Activated B cell treated with CpG ODN at 0.5 μM for 24 hours (primary cell): ENCODE measurements at regions of chr6 and their contacts with region 1.

Region 1: GRCh38 chr6:90285611-90286381 is 10.8 kb downstream of the BACH2 start:
- DNase-seq: no peak
- ATAC-seq: peak; percentile 67
- H3K4me3 Mint-ChIP-seq: peak overlapping the region; percentile 77
- H3K27ac Mint-ChIP-seq: peak overlapping the region; percentile 88
- H3K4me1 Mint-ChIP-seq: peaks cover 92% of the 10 kb centered on the region
- H3K27me3 Mint-ChIP-seq: no peaks in the 10 kb centered on the region
- CTCF ChIP-seq: no peak

Region 2: DNA sequence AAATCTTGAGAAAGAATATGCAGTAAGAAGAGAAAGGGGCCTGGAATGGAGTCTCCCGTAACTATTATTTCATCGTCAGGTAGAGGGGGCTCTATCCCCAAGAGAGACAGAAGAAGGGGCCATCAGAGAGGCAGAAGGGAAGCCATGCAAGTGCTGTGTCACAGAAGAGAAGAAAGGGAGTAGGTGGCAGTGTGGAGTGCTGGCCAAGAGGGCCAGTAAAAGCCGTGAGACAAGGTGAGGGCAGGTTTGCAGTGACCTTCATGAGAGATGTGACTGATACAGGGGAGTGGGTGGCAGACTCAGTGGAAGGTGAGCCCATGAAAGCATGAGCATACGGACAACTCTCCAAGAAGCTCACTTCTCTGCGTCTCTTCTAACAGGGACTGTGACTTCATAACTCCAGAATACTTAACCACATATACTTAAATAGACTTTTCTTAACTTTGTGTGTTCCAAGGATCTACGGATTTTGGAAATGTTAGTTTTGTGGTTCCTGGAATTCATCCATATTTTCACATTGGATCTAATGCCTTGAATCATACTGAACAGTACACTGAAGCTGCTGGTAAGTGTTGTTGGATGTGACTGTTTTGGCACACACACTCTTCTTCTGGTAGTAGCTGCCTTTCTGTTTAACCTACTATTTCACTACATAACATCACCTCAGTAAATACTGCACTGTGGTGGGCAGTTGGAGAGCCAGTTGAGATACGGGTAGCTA is 1124.3 kb before region 1 on chr6:
- CTCF ChIA-PET with region 1: no interaction called
- POLR2A ChIA-PET with region 1: no interaction called
- intact Hi-C with region 1: no loop called
- DNase-seq: no peak
- ATAC-seq: no peak
- H3K4me3 Mint-ChIP-seq: no peak overlapping the region
- H3K27ac Mint-ChIP-seq: no peak overlapping the region
- H3K4me1 Mint-ChIP-seq: no peaks in the 10 kb centered on the region
- H3K27me3 Mint-ChIP-seq: no peaks in the 10 kb centered on the region
- CTCF ChIP-seq: no peak

Region 3: DNA sequence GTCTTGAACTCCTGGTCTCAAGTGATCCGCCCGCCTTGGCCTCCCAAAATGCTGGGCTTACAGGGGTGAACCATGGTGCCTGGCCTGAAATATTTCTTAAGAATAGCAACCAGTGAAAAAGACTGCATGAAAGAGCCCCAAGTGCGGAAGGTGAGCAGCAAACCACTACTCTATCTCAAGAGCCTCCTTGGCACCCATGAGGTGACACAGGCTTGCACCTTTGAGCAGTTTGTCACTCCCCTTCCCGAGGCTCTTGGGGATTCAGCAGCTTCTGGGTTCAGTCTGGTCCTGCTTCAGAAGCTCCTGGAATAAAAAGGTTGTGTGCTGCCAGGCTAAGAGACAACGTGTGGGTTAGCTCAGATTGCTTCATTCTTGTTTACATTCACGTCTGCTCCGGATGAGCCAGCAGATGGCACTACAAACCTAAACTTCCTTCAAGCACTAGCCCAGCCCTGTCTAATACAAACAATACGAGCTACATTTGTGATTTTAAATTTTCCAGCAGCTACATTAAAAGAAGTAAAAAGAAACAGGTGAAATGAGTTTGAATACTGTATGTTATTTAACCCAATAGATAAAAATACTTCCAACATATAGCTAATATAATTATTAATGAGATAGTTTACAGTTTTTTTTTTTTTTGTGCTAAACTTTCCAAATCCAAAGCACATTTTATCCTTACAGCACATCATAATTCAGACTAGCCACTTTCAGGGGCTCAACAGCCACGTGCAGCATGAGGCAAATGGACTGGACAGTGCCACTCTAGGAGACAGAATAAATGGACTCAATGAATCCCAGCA is 345.4 kb before region 1 on chr6:
- CTCF ChIA-PET with region 1: interaction called, 33 read pairs
- POLR2A ChIA-PET with region 1: interaction called, 15 read pairs
- intact Hi-C with region 1: loop called (anchors 1 kb)
- DNase-seq: no peak
- ATAC-seq: peak; percentile 89
- H3K4me3 Mint-ChIP-seq: no peak overlapping the region
- H3K27ac Mint-ChIP-seq: peak overlapping the region; percentile 59
- H3K4me1 Mint-ChIP-seq: peaks cover 13% of the 10 kb centered on the region
- H3K27me3 Mint-ChIP-seq: no peaks in the 10 kb centered on the region
- CTCF ChIP-seq: peak; percentile 58

Region 4: DNA sequence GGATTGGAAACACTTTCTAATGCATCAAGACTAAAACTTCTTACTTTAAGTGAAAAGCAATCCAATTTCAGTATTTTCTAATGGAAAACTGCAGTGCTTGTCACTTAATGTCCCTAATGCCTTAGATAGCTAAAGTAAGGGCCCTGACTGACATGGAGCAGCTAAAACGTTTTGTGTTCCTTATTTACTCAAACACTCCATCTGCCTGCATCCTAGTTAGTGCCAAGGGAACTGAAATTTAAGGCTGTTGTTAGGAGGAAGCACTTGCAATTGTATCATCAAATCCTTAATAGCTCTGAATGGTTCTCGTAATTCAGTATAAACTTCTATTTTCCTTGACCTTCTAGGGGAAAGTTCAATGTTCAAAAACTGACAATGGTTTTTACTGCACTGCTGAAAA is 264.1 kb before region 1 on chr6:
- CTCF ChIA-PET with region 1: no interaction called
- POLR2A ChIA-PET with region 1: no interaction called
- intact Hi-C with region 1: no loop called
- DNase-seq: no peak
- ATAC-seq: no peak
- H3K4me3 Mint-ChIP-seq: no peak overlapping the region
- H3K27ac Mint-ChIP-seq: no peak overlapping the region
- H3K4me1 Mint-ChIP-seq: peaks cover 54% of the 10 kb centered on the region
- H3K27me3 Mint-ChIP-seq: no peaks in the 10 kb centered on the region
- CTCF ChIP-seq: no peak

Region 5: DNA sequence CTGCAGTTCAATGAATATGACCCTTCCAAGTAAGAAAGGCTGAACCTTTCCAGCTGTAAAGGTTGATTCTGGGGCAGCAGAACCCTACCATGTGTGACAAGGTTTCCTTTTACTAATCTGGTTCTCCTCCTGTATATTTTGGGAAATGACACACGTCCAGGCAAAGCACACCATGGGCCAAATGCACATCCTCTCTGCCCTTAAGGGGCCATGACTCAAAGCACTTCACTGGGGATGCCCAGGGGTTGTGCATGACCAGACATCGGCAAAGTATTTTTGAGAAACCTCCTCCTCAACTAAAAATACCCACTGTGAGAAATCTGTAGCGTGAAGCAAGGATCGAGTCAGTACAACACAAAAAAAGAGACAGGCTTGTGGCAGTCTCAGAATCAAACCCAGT is 163.8 kb before region 1 on chr6:
- CTCF ChIA-PET with region 1: no interaction called
- POLR2A ChIA-PET with region 1: no interaction called
- intact Hi-C with region 1: loop called (anchors 5 kb)
- DNase-seq: no peak
- ATAC-seq: peak; percentile 92
- H3K4me3 Mint-ChIP-seq: peak overlapping the region; percentile 53
- H3K27ac Mint-ChIP-seq: peak overlapping the region; percentile 79
- H3K4me1 Mint-ChIP-seq: peaks cover 81% of the 10 kb centered on the region
- H3K27me3 Mint-ChIP-seq: no peaks in the 10 kb centered on the region
- CTCF ChIP-seq: no peak

Region 6: GRCh38 chr6:90251295-90251992 is 34.4 kb before region 1 on chr6:
- CTCF ChIA-PET with region 1: interaction called, 4 read pairs
- POLR2A ChIA-PET with region 1: interaction called, 7 read pairs
- intact Hi-C with region 1: loop called (anchors 2 kb)
- DNase-seq: no peak
- ATAC-seq: peak; percentile 51
- H3K4me3 Mint-ChIP-seq: peak overlapping the region; percentile 9
- H3K27ac Mint-ChIP-seq: peak overlapping the region; percentile 73
- H3K4me1 Mint-ChIP-seq: peaks cover 73% of the 10 kb centered on the region
- H3K27me3 Mint-ChIP-seq: no peaks in the 10 kb centered on the region
- CTCF ChIP-seq: no peak

Region 7: GRCh38 chr6:90375681-90376439 is 90.1 kb after region 1 on chr6:
- CTCF ChIA-PET with region 1: no interaction called
- POLR2A ChIA-PET with region 1: interaction called, 5 read pairs
- intact Hi-C with region 1: loop called (anchors 1 kb)
- DNase-seq: peak; percentile 43
- ATAC-seq: peak; percentile 95
- H3K4me3 Mint-ChIP-seq: peak overlapping the region; percentile 50
- H3K27ac Mint-ChIP-seq: peak overlapping the region; percentile 94
- H3K4me1 Mint-ChIP-seq: peaks cover 72% of the 10 kb centered on the region
- H3K27me3 Mint-ChIP-seq: no peaks in the 10 kb centered on the region
- CTCF ChIP-seq: no peak

Region 8: GRCh38 chr6:90478789-90479602 is 193.2 kb after region 1 on chr6:
- CTCF ChIA-PET with region 1: interaction called, 88 read pairs
- POLR2A ChIA-PET with region 1: interaction called, 3 read pairs
- intact Hi-C with region 1: loop called (anchors 1 kb)
- DNase-seq: peak; percentile 54
- ATAC-seq: peak; percentile 96
- H3K4me3 Mint-ChIP-seq: no peak overlapping the region
- H3K27ac Mint-ChIP-seq: peak overlapping the region; percentile 64
- H3K4me1 Mint-ChIP-seq: peaks cover 22% of the 10 kb centered on the region
- H3K27me3 Mint-ChIP-seq: no peaks in the 10 kb centered on the region
- CTCF ChIP-seq: peak; percentile 95

Region 9: GRCh38 chr6:90502866-90503407 is 217.1 kb after region 1 on chr6:
- CTCF ChIA-PET with region 1: no interaction called
- POLR2A ChIA-PET with region 1: no interaction called
- intact Hi-C with region 1: no loop called
- DNase-seq: no peak
- ATAC-seq: peak; percentile 37
- H3K4me3 Mint-ChIP-seq: no peak overlapping the region
- H3K27ac Mint-ChIP-seq: no peak overlapping the region
- H3K4me1 Mint-ChIP-seq: no peaks in the 10 kb centered on the region
- H3K27me3 Mint-ChIP-seq: no peaks in the 10 kb centered on the region
- CTCF ChIP-seq: no peak